ENCODE measurements at regions of chr2 and their contacts with region 1.

Region 1: DNA sequence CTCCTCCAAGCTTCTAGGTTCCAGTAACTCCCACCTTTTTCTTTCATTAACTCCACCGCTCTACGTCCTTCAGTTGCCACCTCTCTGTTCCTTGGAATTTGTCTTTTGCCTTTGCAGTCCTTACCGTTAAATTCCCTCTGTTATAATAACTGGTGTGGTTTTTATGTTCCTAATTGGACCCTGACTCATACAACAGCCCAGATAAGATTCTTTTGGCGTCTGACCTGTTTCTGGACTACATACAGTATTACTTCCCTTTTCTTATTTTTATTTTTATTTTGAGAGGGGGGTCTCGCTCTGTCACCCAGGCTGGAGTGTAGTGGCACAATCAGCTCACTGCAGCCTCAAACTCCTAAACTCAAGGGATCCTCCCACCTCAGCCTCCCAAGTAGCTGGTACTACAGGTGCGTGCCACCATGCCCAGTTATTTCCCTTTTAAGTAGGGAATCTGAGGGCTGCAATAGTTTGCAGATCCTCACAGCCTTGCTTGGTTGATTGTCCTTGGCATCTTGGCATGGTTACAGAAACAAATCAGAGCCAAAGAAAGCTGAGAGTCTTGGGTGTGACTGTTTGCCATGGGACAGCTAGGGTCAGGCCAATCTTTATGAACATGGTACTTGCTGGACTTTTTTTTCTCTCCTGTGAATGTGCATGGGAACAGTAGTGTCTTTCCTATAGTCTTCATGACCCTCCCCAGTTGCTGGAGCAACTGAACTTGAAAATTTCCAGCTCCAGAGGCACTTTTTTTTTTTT is 22.0 kb downstream of the TCF23 start:
- DNase-seq: no peak
- H3K27ac ChIP-seq: no peak overlapping the region
- CTCF ChIP-seq: no peak

Region 2: GRCh38 chr2:27159271-27159670 is 11.5 kb before region 1 on chr2:
- CTCF ChIA-PET with region 1: interaction called, 11 read pairs
- POLR2A ChIA-PET with region 1: no interaction called
- DNase-seq: no peak
- H3K27ac ChIP-seq: no peak overlapping the region
- CTCF ChIP-seq: no peak

Region 3: GRCh38 chr2:27202854-27203253 is 32.1 kb after region 1 on chr2:
- CTCF ChIA-PET with region 1: no interaction called
- POLR2A ChIA-PET with region 1: no interaction called
- DNase-seq: no peak
- H3K27ac ChIP-seq: no peak overlapping the region
- CTCF ChIP-seq: no peak

Measured in RWPE1 (cell line).